Spleen (tissue), 13 donors: ENCODE measurements at regions of chr12 and their contacts with region 1.

Region 1: DNA sequence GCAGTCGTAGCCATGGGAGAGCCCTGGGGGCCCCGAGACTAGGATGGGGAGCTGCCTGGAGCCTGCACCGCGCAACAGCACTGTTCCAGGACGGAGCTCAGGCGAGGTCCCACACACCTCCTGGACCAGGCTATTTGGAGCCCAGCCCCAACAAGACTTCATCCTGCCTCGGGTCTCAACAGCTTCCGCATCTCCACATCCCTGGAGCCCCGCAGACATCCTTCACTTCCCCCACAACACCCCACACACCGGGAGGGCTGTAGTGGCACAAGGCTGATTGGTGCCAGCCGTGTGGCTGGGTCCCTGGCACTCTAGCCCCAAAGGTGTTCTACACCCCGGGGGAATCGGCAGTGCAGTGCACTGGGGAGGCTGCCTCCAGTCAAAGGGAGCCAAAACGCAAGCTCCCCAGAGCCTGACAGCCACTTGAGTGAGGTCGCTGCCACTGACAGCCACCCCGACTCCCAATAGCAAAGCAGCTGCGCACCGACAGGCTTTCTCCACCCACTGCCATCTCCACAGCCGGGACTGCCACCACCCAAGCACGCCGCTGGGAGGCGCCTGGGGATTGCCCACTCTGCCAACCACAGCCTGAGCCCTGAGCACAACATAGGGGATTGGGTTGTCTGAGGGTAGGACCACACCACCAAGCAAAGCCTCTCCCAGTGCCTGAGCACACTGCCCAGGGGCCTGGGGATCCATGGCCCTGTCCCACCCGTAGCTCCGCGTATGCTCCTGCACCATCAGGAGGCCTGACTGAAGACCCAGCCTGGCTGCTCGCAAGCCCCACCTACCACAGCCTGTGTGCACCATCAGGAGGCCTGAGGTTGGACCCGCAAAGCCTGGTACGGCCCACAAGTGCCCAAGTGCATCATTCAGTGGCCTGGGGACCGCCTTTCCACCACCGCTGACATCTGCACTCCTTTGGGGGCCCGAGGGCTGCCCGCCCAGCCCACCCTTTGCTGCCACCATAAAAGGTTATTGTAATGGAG is 13.2 kb upstream of the KLRF1 start:
- DNase-seq: peak; percentile 98
- H3K4me3 ChIP-seq: peak overlapping the region; percentile 15 to 68 (median 34)
- H3K27ac ChIP-seq: peak overlapping the region in 6 of 8 donors; percentile 32 to 80 (median 59)
- H3K4me1 ChIP-seq: peaks cover 0 to 37% (median 19%) of the 10 kb centered on the region in 6 donors
- H3K27me3 ChIP-seq: peaks cover 0 to 11% (median 0%) of the 10 kb centered on the region in 7 donors
- CTCF ChIP-seq: peak; percentile 80 to 97 (median 95)
- POLR2A ChIP-seq: no peak

Region 2: DNA sequence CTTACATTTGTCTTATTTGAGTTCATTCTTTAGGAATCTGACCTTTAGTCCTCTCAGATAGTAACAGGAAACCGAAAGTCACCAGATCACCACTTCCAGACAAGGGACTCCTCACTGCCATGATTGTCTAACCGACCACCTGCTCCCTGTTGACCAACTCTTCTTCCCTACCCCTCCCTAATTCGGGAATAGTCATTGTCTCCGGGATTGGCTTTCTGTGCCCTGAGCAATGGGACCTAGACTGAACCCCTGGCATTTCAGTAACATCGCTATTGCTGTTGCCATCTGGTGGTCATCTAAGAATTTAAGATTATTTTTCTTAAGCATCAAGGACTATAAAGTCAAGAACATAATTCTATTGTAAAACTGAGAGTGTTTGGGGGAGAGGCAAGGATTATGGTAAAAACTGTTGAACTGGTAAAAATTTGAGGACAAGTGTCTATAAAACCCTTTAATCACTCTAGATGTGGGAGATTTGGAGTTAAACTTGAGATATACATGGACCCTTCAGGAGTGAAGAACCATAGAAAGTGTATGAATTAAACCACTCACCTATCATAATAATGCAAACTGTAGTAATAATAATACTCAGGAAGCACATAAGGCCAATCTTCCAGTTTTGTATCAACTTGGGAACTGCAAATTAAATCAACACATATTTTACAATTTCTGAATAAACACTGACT is 111.7 kb after region 1 on chr12:
- intact Hi-C with region 1: loop called (anchors 2 kb)
- DNase-seq: no peak
- H3K4me3 ChIP-seq: peak overlapping the region in 2 of 8 donors; percentile 3 to 49
- H3K27ac ChIP-seq: no peak overlapping the region
- H3K4me1 ChIP-seq: peaks cover 0 to 10% (median 0%) of the 10 kb centered on the region in 6 donors
- H3K27me3 ChIP-seq: no peaks in the 10 kb centered on the region
- CTCF ChIP-seq: peak in 9 of 11 experiments; percentile 11 to 62 (median 48)
- POLR2A ChIP-seq: no peak